ENCODE measurements at regions of chr2 and their contacts with region 1.

Region 1: GRCh38 chr2:175167792-175168563 is at the start of gene ATF2:
- DNase-seq: peak; percentile 92 to 99
- ATAC-seq: peak; percentile 89 to 98 (median 90)
- H3K4me3 ChIP-seq: peak within 1 kb of the TSS; percentile 93
- H3K4me3 Mint-ChIP-seq: peak within 1 kb of the TSS; percentile 100
- H3K27ac ChIP-seq: peak within 1 kb of the TSS; percentile 87
- H3K27ac Mint-ChIP-seq: peak within 1 kb of the TSS; percentile 93 to 94
- H3K4me1 ChIP-seq: peaks cover 10% of the 10 kb centered on the region
- H3K4me1 Mint-ChIP-seq: peaks cover 18 to 36% of the 10 kb centered on the region in 2 donors
- H3K27me3 ChIP-seq: no peaks in the 10 kb centered on the region
- H3K27me3 Mint-ChIP-seq: no peaks in the 10 kb centered on the region
- CTCF ChIP-seq: no peak
- total RNA-seq, gene ATF2: 66.7 to 76.5 (median 74.4) TPM

Region 2: GRCh38 chr2:174492963-174493431 is 675.0 kb before region 1 on chr2:
- intact Hi-C with region 1: loop called (anchors 2 kb)
- DNase-seq: peak; percentile 42 to 89
- ATAC-seq: peak; percentile 91 to 93 (median 92)
- H3K4me3 ChIP-seq: peak overlapping the region; percentile 24
- H3K4me3 Mint-ChIP-seq: peak overlapping the region; percentile 86
- H3K27ac ChIP-seq: peak overlapping the region; percentile 96
- H3K27ac Mint-ChIP-seq: peak overlapping the region; percentile 93 to 95
- H3K4me1 ChIP-seq: peaks cover 32% of the 10 kb centered on the region
- H3K4me1 Mint-ChIP-seq: peaks cover 47 to 54% of the 10 kb centered on the region in 2 donors
- H3K27me3 ChIP-seq: no peaks in the 10 kb centered on the region
- H3K27me3 Mint-ChIP-seq: no peaks in the 10 kb centered on the region
- CTCF ChIP-seq: no peak

Region 3: DNA sequence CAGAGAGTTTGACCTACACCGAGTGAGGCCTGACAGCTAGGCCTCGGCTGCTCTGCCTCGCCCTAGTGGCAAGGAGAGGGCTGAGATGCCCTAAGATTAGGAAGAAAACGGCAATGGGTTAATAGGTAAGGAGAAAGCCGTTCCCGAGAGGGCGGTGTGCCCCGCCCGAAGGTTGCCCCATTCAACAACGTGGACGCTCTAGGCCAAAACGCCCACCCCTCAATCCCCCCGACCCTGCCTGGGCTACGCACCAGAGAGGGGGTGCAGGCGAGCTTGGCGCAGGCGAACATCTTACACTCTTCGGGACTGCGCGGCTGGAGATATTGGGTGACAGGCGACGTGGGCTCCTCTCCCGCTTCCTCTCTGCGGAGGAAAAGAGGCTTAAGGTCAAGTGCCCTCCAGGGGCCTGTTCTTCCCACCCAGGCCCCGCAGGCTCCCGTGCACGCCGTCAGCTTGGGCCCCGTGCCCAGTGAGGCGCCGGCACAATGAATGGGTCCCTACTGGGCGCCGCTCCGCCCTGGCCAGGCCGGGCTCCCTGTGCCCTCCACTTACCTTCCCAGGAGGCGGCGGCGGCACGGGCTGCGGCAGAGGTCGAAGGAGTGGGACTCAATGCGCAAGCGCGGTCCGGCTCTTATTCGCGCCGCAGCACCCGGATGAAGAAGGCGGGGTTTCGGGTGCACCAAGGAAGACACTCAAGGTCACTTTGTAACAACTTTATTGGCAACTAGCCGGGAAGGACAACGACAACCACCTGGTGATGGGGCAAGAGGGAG is 13.3 kb after region 1 on chr2 and contains the start of gene ATP5MC3:
- intact Hi-C with region 1: loop called (anchors 1 kb)
- DNase-seq: peak; percentile 83 to 98
- ATAC-seq: peak; percentile 89 to 93 (median 91)
- H3K4me3 ChIP-seq: peak within 1 kb of the TSS; percentile 62
- H3K4me3 Mint-ChIP-seq: peak within 1 kb of the TSS; percentile 95
- H3K27ac ChIP-seq: peak within 1 kb of the TSS; percentile 66
- H3K27ac Mint-ChIP-seq: peak within 1 kb of the TSS; percentile 83 to 91
- H3K4me1 ChIP-seq: peaks cover 12% of the 10 kb centered on the region
- H3K4me1 Mint-ChIP-seq: peaks cover 23 to 25% of the 10 kb centered on the region in 2 donors
- H3K27me3 ChIP-seq: no peaks in the 10 kb centered on the region
- H3K27me3 Mint-ChIP-seq: no peaks in the 10 kb centered on the region
- CTCF ChIP-seq: no peak
- total RNA-seq, gene ATP5MC3: 67.1 to 82.2 (median 81.0) TPM